Heart right ventricle (tissue), 16 donors: ENCODE measurements at regions of chr12 and their contacts with region 1.

Region 1: DNA sequence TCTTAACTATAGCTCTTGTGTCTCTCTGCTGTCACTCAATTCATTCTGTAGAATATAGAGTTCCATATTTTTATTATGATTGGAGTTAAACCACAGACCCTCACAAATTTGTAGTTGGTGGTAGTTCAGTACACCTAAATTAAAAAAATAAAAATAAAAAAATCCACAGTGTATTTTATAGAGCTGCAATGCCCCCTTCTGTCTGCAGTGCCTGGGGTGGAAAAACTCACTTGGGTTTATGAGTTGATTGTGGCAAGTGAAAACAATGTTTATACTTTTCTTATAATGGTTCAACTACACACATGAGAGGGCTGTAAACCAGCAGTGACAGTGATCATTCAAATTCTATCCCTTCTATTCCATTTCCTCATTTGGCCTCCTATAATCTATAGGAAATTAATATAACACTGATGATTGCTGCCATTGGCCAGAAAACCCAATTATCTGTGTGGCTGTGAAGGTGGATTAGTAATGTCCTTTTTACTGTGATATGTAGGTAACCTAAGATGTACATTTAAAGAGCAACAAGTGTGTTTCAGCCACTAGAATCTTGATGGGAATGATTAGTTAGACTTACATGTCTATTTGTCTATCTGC is 166.9 kb upstream of the LRIG3 start:
- DNase-seq: no peak
- ATAC-seq: no peak
- H3K4me3 ChIP-seq: no peak overlapping the region
- H3K27ac ChIP-seq: no peak overlapping the region
- H3K4me1 ChIP-seq: no peaks in the 10 kb centered on the region
- H3K27me3 ChIP-seq: no peaks in the 10 kb centered on the region
- CTCF ChIP-seq: peak in 8 of 9 donors; percentile 16 to 61 (median 46)

Region 2: DNA sequence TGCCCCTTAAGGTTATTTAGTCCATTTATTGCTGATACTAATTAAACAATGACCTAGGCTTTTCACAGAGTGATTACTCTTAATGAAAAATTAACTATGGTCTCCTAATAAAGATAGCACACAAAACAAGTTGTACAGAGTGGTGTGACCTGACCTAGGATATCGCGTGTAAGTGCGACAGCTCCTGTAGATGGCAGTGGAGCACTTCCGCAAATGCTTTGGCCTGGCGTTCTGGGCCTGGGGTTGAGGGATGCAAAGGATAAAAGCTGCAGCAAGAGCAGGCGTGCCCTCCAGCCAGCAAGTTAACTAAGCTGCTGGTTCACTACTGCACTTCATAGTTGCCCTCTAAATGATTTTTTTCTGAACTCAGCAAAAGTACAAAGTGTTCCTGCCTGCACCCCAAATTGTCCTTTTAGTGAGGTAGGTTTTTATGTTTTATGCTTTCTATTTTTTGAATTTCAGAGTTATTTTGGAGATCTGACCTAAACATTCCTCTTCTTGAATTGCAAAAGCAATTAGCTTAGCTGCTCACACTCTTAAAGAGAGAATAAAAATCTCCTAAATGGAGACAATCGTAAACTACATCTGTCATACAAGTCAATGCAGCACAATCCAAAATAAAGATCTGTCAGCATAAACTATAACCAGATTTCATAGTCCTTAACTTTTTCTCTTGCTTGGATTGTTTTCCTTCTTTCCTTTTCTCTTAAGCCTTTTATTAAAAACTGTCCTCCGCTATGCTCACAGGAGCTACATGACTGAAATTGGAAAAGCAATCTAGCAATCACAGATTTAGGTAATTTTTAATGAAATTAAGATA is 546.5 kb before region 1 on chr12:
- intact Hi-C with region 1: loop called in 4 of 10 experiments (anchors 5 to 10 kb)
- DNase-seq: peak; percentile 40 to 54
- ATAC-seq: peak; percentile 62 to 94 (median 84)
- H3K4me3 ChIP-seq: no peak overlapping the region
- H3K27ac ChIP-seq: no peak overlapping the region
- H3K4me1 ChIP-seq: no peaks in the 10 kb centered on the region
- H3K27me3 ChIP-seq: no peaks in the 10 kb centered on the region
- CTCF ChIP-seq: peak; percentile 42 to 81 (median 72)

Region 3: GRCh38 chr12:58833853-58834252 is 253.3 kb before region 1 on chr12:
- intact Hi-C with region 1: loop called in 1 of 10 experiments (anchors 5 kb)
- DNase-seq: no peak
- ATAC-seq: no peak
- H3K4me3 ChIP-seq: no peak overlapping the region
- H3K27ac ChIP-seq: no peak overlapping the region
- H3K4me1 ChIP-seq: no peaks in the 10 kb centered on the region
- H3K27me3 ChIP-seq: no peaks in the 10 kb centered on the region
- CTCF ChIP-seq: peak in 2 of 9 donors; percentile 17 to 43